PC-3 (cell line): ENCODE measurements at regions of chr22 and their contacts with region 1.

Region 1: DNA sequence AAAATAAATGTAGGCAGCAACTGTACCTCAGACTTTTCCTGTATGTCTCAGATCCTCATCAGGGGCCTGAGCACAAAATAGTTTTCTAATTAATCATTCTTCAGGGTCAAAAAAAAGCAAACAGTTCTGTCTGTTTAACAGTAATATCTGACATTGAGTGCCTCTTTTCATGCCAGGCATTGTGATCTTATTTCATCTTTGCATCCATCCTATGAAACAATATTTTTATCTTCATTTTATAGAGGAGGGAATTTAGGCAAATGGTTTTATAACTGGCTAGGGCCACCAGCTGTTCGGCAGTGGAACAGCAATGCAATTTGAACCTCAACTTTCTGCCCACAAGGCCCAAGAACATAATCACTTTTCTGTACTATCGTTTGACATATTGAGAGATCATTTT is 145.6 kb downstream of the WNT7B start:
- DNase-seq: peak; percentile 62
- ATAC-seq: peak; percentile 70
- H3K4me3 ChIP-seq: no peak overlapping the region
- H3K27ac ChIP-seq: peak overlapping the region; percentile 79
- H3K4me1 ChIP-seq: peaks cover 26% of the 10 kb centered on the region
- H3K27me3 ChIP-seq: no peaks in the 10 kb centered on the region
- CTCF ChIP-seq: peak; percentile 71

Region 2: GRCh38 chr22:45645526-45646414 is 185.6 kb before region 1 on chr22:
- CTCF ChIA-PET with region 1: no interaction called
- POLR2A ChIA-PET with region 1: no interaction called
- intact Hi-C with region 1: loop called (anchors 1 kb)
- DNase-seq: peak; percentile 73
- ATAC-seq: peak; percentile 97
- H3K4me3 ChIP-seq: peak overlapping the region; percentile 55
- H3K27ac ChIP-seq: peak overlapping the region; percentile 44
- H3K4me1 ChIP-seq: peaks cover 10% of the 10 kb centered on the region
- H3K27me3 ChIP-seq: no peaks in the 10 kb centered on the region
- CTCF ChIP-seq: peak; percentile 76

Region 3: GRCh38 chr22:45731798-45732495 is 99.4 kb before region 1 on chr22:
- CTCF ChIA-PET with region 1: no interaction called
- POLR2A ChIA-PET with region 1: no interaction called
- intact Hi-C with region 1: loop called (anchors 2 kb)
- DNase-seq: peak; percentile 15
- ATAC-seq: peak; percentile 31; the same call in 1 of the 2 replicates
- H3K4me3 ChIP-seq: no peak overlapping the region
- H3K27ac ChIP-seq: no peak overlapping the region
- H3K4me1 ChIP-seq: peaks cover 2% of the 10 kb centered on the region; the same call in 1 of the 2 replicates
- H3K27me3 ChIP-seq: no peaks in the 10 kb centered on the region
- CTCF ChIP-seq: peak; percentile 62

Region 4: GRCh38 chr22:45812910-45813309 is 18.5 kb before region 1 on chr22:
- CTCF ChIA-PET with region 1: no interaction called
- POLR2A ChIA-PET with region 1: no interaction called
- intact Hi-C with region 1: no loop called
- DNase-seq: no peak
- ATAC-seq: no peak
- H3K4me3 ChIP-seq: no peak overlapping the region
- H3K27ac ChIP-seq: no peak overlapping the region
- H3K4me1 ChIP-seq: peaks cover 4% of the 10 kb centered on the region
- H3K27me3 ChIP-seq: no peaks in the 10 kb centered on the region
- CTCF ChIP-seq: no peak